ENCODE measurements at regions of chr9 and their contacts with region 1.

Region 1: DNA sequence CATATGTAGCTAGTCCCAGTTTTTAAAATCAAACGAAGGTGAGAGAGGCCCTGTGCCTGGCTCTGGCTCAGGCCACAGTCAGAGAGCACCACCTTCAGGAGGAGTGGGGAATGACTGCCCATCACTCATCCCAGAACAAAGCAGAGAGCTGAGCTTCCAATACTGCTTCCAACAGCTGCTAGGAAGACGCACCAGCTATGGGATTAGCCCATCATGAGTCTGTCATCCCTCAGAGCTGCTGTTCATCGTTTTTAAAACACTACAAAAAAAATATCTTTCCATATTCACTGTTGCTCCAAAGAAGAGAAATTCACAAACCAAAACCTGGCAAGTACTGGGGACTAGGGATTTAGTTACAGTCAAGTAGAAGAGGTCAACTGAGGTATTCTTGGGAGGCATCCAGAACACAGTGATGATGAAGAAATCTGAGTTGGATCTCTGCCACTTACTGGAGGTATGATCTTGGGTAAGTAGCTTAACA is 102.4 kb downstream of the CDK5RAP2 start:
- DNase-seq: peak in 4 of 5 donors; percentile 36 to 56 (median 50)
- ATAC-seq: peak; percentile 56 to 83 (median 82)
- H3K4me3 ChIP-seq: no peak overlapping the region
- H3K27ac ChIP-seq: no peak overlapping the region
- H3K4me1 ChIP-seq: peaks cover 0 to 45% (median 7%) of the 10 kb centered on the region in 12 donors
- H3K27me3 ChIP-seq: no peaks in the 10 kb centered on the region
- CTCF ChIP-seq: peak; percentile 74 to 92 (median 88)
- POLR2A ChIP-seq: no peak

Region 2: GRCh38 chr9:119556129-119556875 is 921.3 kb before region 1 on chr9:
- intact Hi-C with region 1: loop called in 9 of 10 experiments (anchors 5 to 10 kb)
- DNase-seq: peak; percentile 63 to 85 (median 66)
- ATAC-seq: peak; percentile 58 to 96 (median 87)
- H3K4me3 ChIP-seq: peak overlapping the region in 9 of 12 donors; percentile 19 to 52 (median 37)
- H3K27ac ChIP-seq: no peak overlapping the region
- H3K4me1 ChIP-seq: peaks cover 0 to 12% (median 1%) of the 10 kb centered on the region in 12 donors
- H3K27me3 ChIP-seq: peaks cover 0 to 20% (median 0%) of the 10 kb centered on the region in 9 donors
- CTCF ChIP-seq: peak; percentile 79 to 97 (median 92)
- POLR2A ChIP-seq: no peak

Region 3: DNA sequence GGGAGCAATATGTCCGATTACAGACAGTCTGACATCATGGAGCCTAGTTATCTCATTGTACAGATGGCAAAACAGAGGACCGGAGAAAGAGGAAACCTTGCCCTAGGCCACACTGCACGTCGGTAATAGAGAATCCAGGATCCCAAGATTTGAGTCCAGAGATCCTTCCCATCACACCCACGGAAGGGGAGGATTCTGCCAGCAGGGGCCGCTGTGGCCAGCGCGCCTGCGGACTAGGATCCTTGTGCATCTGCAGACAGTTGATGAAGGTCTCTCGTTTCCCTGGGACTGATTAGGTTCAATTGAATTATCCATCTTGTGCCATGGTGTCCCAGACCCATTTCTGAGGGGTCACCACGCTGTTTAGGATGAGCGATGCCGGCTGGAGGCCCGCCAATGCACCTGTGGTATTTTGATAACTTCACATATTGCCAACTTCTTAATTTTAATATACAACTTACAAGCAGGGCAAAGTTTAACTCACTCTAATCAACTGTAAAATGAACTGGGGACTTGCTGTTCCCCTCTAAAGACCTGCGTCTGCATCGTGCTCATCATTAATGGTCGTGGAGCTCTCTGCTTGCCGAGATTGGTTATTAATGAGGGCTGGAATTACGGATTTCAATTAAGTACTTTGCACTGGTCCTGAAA is 515.7 kb before region 1 on chr9:
- intact Hi-C with region 1: loop called in 6 of 10 experiments (anchors 5 to 10 kb)
- DNase-seq: no peak
- ATAC-seq: peak in 1 of 4 donors; percentile 42
- H3K4me3 ChIP-seq: no peak overlapping the region
- H3K27ac ChIP-seq: no peak overlapping the region
- H3K4me1 ChIP-seq: peaks cover 0 to 11% (median 3%) of the 10 kb centered on the region in 12 donors
- H3K27me3 ChIP-seq: peaks cover 0 to 4% (median 0%) of the 10 kb centered on the region in 9 donors
- CTCF ChIP-seq: peak; percentile 21 to 65 (median 49)
- POLR2A ChIP-seq: no peak

Region 4: DNA sequence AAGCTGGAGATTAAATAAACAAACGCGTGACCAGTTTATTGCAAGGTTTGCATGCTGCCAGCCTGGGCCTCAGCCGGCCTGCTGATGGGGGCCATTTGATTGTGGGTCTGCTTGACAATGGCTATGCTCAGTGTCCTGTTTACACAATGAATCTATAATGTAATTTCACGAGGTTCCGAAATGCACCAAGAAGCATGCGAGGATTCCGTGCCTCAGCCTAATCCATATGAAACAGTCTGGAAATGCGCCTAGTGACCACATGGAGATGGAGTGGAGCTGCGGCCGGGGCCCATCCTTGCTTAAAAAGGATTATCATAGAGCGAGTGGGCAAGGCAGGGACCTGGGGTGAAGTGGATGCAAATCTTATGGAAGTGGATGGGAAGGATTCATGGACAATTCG is 280.0 kb before region 1 on chr9:
- intact Hi-C with region 1: no loop called
- DNase-seq: no peak
- ATAC-seq: no peak
- H3K4me3 ChIP-seq: no peak overlapping the region
- H3K27ac ChIP-seq: no peak overlapping the region
- H3K4me1 ChIP-seq: no peaks in the 10 kb centered on the region
- H3K27me3 ChIP-seq: peaks cover 0 to 6% (median 0%) of the 10 kb centered on the region in 9 donors
- CTCF ChIP-seq: no peak
- POLR2A ChIP-seq: no peak

Region 5: GRCh38 chr9:120299785-120300184 is 177.8 kb before region 1 on chr9:
- intact Hi-C with region 1: no loop called
- DNase-seq: no peak
- ATAC-seq: no peak
- H3K4me3 ChIP-seq: no peak overlapping the region
- H3K27ac ChIP-seq: no peak overlapping the region
- H3K4me1 ChIP-seq: no peaks in the 10 kb centered on the region
- H3K27me3 ChIP-seq: peaks cover 0 to 2% (median 0%) of the 10 kb centered on the region in 9 donors
- CTCF ChIP-seq: no peak
- POLR2A ChIP-seq: no peak

Region 6: GRCh38 chr9:120412425-120412951 is 65.1 kb before region 1 on chr9:
- intact Hi-C with region 1: loop called in 1 of 10 experiments (anchors 5 kb)
- DNase-seq: no peak
- ATAC-seq: peak in 3 of 4 donors; percentile 27 to 65 (median 49)
- H3K4me3 ChIP-seq: no peak overlapping the region
- H3K27ac ChIP-seq: peak overlapping the region in 7 of 12 donors; percentile 15 to 56 (median 33)
- H3K4me1 ChIP-seq: peaks cover 0 to 22% (median 8%) of the 10 kb centered on the region in 12 donors
- H3K27me3 ChIP-seq: no peaks in the 10 kb centered on the region
- CTCF ChIP-seq: no peak
- POLR2A ChIP-seq: no peak

Region 7: DNA sequence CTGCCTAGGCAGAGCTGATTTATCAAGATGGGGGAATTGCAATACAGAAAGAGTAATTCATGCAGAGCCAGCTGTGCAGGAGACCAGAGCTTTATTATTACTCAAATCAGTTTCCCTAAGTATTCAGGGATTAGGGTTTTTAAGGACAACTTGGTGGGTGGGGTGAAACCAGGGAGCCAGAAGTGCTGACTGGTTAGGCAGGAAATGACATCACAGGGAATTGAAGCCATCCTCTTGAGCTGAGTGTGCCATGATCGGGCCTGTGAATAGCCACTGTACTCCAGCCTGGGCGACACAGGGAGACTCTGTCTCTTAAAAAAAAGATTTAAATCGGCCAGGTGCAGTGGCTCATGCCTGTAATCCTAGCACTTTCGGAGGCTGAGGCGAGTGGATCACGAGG is 147.7 kb after region 1 on chr9:
- intact Hi-C with region 1: no loop called
- DNase-seq: no peak
- ATAC-seq: peak in 2 of 4 donors; percentile 28 to 45
- H3K4me3 ChIP-seq: no peak overlapping the region
- H3K27ac ChIP-seq: no peak overlapping the region
- H3K4me1 ChIP-seq: peaks cover 0 to 16% (median 0%) of the 10 kb centered on the region in 12 donors
- H3K27me3 ChIP-seq: no peaks in the 10 kb centered on the region
- CTCF ChIP-seq: no peak
- POLR2A ChIP-seq: no peak